A549 (cell line): ENCODE measurements at regions of chr15 and their contacts with region 1.

Region 1: GRCh38 chr15:57370929-57371328 is 5.4 kb upstream of the CGNL1 start:
- DNase-seq: no peak
- ATAC-seq: no peak
- H3K4me3 ChIP-seq: no peak overlapping the region
- H3K27ac ChIP-seq: no peak overlapping the region
- H3K4me1 ChIP-seq: no peaks in the 10 kb centered on the region
- CTCF ChIP-seq: no peak
- EP300 ChIP-seq: no peak
- POLR2A ChIP-seq: no peak
- RAD21 ChIP-seq: no peak

Region 2: GRCh38 chr15:57356636-57357035 is 14.3 kb before region 1 on chr15:
- CTCF ChIA-PET with region 1: interaction called, 14 read pairs
- POLR2A ChIA-PET with region 1: no interaction called
- DNase-seq: no peak
- ATAC-seq: peak in 1 of 2 experiments; percentile 40; a peak in 2 of 6 replicates
- H3K4me3 ChIP-seq: no peak overlapping the region
- H3K27ac ChIP-seq: no peak overlapping the region
- H3K4me1 ChIP-seq: no peaks in the 10 kb centered on the region
- CTCF ChIP-seq: no peak
- EP300 ChIP-seq: no peak
- POLR2A ChIP-seq: no peak
- RAD21 ChIP-seq: no peak

Region 3: DNA sequence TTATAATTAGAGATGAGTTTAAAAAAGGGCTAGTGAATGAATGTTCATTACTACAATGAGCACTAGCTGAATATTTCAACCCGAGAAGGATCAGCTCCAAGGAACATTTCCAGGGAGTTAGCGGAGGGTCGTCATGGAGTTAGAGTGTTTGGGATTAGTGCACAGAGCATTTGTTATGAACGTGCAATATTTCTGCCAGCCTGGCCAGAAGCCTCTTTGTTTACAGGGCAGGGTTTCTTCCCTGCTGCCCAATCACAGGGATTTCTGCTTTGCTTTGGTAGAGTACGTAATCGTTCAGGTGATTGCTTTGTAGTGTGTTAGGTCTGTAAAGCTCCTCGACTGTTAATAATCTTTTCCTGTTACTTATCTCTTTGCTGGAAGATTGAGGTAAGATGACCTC is 11.3 kb after region 1 on chr15:
- CTCF ChIA-PET with region 1: interaction called, 17 read pairs
- POLR2A ChIA-PET with region 1: no interaction called
- DNase-seq: no peak
- ATAC-seq: no peak
- H3K4me3 ChIP-seq: no peak overlapping the region
- H3K27ac ChIP-seq: no peak overlapping the region
- H3K4me1 ChIP-seq: peaks cover 20% of the 10 kb centered on the region
- CTCF ChIP-seq: no peak
- EP300 ChIP-seq: no peak
- POLR2A ChIP-seq: no peak
- RAD21 ChIP-seq: no peak

Region 4: DNA sequence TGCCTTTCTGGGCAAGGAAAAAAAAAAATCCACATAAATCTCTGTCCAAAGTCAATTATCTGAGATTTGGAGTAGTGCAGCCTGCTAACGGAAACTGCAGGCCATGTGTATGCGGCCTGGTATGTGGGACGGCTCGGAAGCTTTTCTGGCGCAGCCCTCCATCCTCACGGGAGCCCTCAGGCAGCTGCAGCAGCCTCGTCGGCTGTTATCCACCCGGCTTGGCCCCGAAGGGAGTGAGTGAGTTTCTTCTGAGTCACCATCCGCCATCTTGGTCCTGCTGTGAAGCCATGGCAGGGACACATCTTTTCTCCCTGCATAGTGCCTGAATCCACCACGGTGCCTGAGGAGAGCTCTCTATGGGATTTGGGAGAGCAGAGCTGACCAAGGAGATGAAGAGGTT is 398.3 kb after region 1 on chr15:
- CTCF ChIA-PET with region 1: no interaction called
- POLR2A ChIA-PET with region 1: no interaction called
- DNase-seq: no peak
- ATAC-seq: no peak
- H3K4me3 ChIP-seq: no peak overlapping the region
- H3K27ac ChIP-seq: no peak overlapping the region
- H3K4me1 ChIP-seq: no peaks in the 10 kb centered on the region
- CTCF ChIP-seq: no peak
- EP300 ChIP-seq: no peak
- POLR2A ChIP-seq: no peak
- RAD21 ChIP-seq: no peak